ENCODE measurements at regions of chr3 and their contacts with region 1.

Region 1: DNA sequence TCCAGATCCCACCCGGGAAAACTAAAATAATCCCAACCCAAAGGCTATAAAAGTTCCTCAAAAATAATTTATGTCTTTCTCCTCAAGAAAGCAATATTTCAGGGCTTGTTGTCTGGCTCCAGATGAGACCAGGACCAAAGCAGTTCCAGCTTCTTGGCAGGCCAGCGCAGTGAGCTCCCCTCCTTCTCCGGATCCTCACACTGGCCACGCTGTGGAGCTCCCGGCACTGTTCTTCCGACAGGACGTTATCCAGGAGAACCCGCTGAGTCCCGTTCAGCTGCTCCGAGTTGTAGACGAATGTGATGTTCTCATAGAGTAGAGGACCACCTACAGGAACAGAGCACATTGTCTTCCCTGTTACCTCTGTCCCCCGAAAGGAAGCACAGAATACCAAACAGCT is 146.3 kb downstream of the P3H2 start:
- DNase-seq: no peak
- H3K4me3 ChIP-seq: no peak overlapping the region
- CTCF ChIP-seq: no peak

Region 2: DNA sequence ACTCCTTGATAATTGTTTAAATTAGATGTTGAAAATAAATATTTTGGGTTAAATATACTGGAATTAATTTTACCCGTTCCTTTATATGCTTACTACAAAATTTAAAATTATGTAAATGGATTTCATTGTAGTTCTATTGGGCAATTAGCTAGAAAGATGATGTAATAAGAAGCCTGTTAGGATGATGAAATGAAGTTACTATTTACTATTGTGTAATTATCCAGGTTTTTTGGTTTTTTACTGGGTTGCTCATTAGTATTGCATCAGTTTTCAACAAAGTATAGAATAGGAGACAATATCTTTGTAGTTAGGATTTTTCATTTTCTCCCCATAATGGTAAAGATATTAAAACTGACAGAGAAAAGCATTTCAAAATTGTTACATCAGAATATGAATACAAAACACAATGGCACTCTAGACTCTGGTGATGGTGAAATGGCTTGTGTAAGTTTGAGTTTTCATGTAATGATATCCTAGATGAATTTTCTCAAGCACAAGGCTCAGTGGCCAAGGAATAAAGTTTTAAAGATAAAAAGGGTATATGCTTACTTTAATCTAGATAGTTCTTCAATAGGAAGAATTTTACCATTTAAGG is 75.7 kb before region 1 on chr3:
- in situ Hi-C with region 1: no loop called
- DNase-seq: no peak
- H3K4me3 ChIP-seq: no peak overlapping the region
- CTCF ChIP-seq: no peak

Region 3: GRCh38 chr3:190048932-190049441 is 74.6 kb after region 1 on chr3:
- in situ Hi-C with region 1: loop called (anchors 5 kb)
- DNase-seq: peak; percentile 62
- H3K4me3 ChIP-seq: peak overlapping the region; percentile 16
- CTCF ChIP-seq: no peak

Region 4: DNA sequence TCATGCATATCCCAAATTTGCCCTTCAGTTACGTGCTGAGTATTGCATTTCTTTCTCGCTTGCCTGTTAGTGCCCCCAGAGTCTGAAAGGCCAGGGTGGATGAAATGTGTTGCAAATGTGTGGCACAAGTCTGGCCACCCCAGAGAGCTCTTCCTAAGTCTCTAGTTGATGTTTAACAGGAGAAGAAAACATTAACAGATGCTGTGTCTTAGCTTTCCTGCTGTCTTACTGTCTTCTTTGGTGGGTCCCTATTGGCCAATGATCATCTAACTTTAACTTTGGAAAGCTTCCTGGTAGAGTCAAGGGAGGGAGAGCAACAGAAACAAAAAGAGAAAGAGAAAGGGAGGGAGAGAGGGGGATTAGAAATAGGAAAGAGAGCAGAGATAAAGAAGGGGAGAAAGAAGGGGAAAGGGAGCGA is 223.0 kb after region 1 on chr3:
- in situ Hi-C with region 1: loop called (anchors 5 kb)
- DNase-seq: no peak
- H3K4me3 ChIP-seq: no peak overlapping the region
- CTCF ChIP-seq: no peak

Region 5: GRCh38 chr3:190443257-190443656 is 468.9 kb after region 1 on chr3:
- in situ Hi-C with region 1: loop called (anchors 5 kb)
- DNase-seq: no peak
- H3K4me3 ChIP-seq: no peak overlapping the region
- CTCF ChIP-seq: peak; percentile 52